Posterior cingulate gyrus (tissue), 11 donors: ENCODE measurements at regions of chr2 and their contacts with region 1.

Region 1: DNA sequence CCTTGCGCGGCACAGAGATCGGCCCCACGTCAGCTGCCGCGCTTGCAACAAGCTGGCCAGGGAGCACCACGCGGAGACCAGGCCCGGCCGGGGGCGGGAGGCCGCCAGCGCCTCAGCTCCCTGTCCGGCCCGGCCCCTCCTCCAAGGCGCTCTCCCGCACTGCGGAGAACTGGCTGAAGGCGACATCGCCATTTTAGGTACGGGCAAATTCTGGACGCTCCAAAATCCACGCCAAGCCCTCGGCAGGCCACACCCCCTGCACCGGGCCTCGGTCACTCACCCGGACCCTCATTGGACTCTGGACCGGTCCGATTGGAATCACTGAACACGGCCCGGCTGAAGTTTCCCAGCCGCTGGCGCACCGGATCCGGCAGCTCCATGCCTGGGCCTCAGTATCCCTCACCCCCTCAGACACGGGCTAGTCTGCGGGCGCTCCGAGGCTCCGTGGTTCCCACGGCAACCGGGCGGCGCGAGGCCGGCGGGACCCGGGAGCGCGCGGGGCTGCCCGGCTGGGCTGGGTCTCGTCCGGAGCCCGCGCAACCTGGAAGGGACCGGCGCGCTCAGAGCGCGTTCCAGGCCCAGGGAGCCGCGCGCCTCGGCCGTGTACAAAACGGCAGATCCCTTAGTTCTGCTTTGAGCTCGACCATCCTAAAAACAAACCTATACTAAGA is at the start of gene TMEM17:
- DNase-seq: peak; percentile 85 to 98 (median 89)

Region 2: GRCh38 chr2:62705007-62705829 is 199.3 kb after region 1 on chr2 and contains the start of gene EHBP1:
- intact Hi-C with region 1: loop called (anchors 1 kb)
- DNase-seq: peak; percentile 97 to 100 (median 99)